ENCODE measurements at regions of chr10 and their contacts with region 1.

Region 1: DNA sequence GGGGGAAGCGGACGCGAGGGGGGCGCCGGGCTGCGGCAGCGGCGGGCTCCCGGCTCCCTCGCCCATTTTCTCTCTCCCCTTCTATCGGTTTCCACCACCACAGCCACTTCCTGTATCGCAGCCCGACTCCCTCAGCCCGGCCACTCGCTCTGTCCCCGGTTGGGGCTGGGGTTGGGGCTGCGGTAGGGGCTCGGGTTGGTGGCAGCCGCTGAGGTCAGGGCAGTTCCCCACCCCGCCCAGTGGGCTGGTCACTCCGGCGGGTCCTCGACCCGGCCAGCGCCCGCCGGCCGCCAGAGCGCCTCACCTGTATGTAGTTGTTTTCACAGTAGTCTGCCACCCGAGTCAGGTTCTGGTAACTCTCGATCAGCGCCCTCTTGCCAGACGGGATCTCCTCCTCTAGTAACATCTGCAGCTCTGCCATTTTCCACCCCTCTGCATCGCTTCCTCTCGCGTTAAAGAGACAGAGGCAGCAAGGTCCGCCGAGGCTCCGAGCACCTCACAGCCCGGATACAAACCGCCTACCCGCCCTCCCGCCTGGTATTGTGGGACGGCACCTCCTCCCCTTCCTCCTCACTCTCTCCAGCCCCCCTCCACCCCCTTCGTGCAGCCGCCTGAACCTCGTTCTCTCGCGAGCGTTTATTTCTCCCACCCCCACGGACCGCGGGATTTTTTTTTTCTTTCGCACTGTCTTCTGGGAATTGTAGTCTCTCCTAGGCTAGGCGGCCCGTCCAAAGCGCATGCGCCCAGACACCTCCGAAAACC is at the start of gene ABI1:
- DNase-seq: peak; percentile 94 to 100 (median 99)
- ATAC-seq: peak; percentile 94
- H3K4me3 ChIP-seq: peak within 1 kb of the TSS; percentile 80
- H3K4me3 Mint-ChIP-seq: peak within 1 kb of the TSS; percentile 88 to 100 (median 97)
- H3K27ac ChIP-seq: peak within 1 kb of the TSS; percentile 96
- H3K27ac Mint-ChIP-seq: peak within 1 kb of the TSS; percentile 95 to 100 (median 97)
- H3K4me1 ChIP-seq: peaks cover 18 to 22% of the 10 kb centered on the region in 2 donors
- H3K4me1 Mint-ChIP-seq: peaks cover 16 to 45% (median 32%) of the 10 kb centered on the region in 7 donors
- H3K27me3 ChIP-seq: no peaks in the 10 kb centered on the region
- H3K27me3 Mint-ChIP-seq: peaks cover 0 to 26% (median 0%) of the 10 kb centered on the region in 5 donors
- total RNA-seq, gene ABI1: 61.9 to 73.7 (median 65.4) TPM

Region 2: GRCh38 chr10:25016376-25017154 is 1844.1 kb before region 1 on chr10 and contains the start of gene THNSL1:
- CTCF ChIA-PET with region 1: no interaction called
- POLR2A ChIA-PET with region 1: no interaction called
- intact Hi-C with region 1: loop called in 1 of 2 experiments (anchors 5 kb)
- DNase-seq: peak; percentile 90 to 99 (median 96)
- ATAC-seq: peak; percentile 97
- H3K4me3 ChIP-seq: peak within 1 kb of the TSS; percentile 76
- H3K4me3 Mint-ChIP-seq: peak within 1 kb of the TSS; percentile 87 to 98 (median 90)
- H3K27ac ChIP-seq: peak within 1 kb of the TSS; percentile 82
- H3K27ac Mint-ChIP-seq: peak within 1 kb of the TSS; percentile 91 to 99 (median 94)
- H3K4me1 ChIP-seq: peaks cover 0 to 8% of the 10 kb centered on the region in 2 donors
- H3K4me1 Mint-ChIP-seq: peaks cover 11 to 43% (median 32%) of the 10 kb centered on the region in 7 donors
- H3K27me3 ChIP-seq: no peaks in the 10 kb centered on the region
- H3K27me3 Mint-ChIP-seq: peaks cover 0 to 10% (median 0%) of the 10 kb centered on the region in 5 donors
- total RNA-seq, gene THNSL1: 1.4 to 10.6 (median 2.5) TPM

Region 3: DNA sequence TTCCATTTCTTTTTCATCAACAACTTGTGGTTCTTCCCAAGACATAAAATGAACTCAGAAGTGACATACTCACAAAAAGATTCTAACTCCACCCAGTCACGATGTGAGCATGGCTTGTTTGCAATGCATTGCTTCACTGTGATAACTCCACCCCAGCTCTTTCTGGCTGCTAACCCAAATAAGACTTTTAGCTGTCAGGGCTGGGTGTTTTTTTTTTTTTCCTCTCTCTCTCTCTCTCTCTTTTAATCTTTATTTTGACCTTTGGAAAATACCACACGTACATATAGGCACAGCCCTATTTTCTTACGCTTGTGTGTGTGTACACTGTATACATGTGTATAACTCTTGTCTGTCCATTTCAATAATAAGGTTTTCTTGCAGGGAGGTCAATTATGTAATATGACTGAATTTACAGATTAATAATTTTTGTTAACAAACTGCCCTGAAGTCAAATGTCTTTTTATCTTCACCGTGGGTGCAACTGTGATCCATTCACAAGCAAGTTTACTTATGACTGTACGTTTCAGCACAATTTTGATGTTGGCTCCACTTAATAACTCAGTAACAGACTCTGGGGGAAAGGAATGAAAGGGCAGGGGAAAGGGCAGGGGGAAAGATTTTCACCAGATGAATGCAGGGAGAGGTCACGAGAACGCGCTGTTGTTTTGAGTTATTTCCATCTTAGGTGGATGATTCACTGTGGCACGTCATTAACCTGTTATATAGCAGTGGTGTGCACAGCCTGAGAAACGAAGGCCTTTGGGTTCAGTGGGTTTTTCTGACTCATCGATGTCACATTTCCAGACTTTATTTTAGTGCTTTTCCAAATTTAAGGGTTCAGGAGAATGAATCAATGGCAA is 373.4 kb before region 1 on chr10:
- CTCF ChIA-PET with region 1: no interaction called
- POLR2A ChIA-PET with region 1: no interaction called
- intact Hi-C with region 1: loop called (anchors 2 kb)
- DNase-seq: peak in 8 of 9 donors; percentile 50 to 86 (median 66)
- ATAC-seq: peak; percentile 85
- H3K4me3 ChIP-seq: peak overlapping the region; percentile 43
- H3K4me3 Mint-ChIP-seq: peak overlapping the region; percentile 8 to 83 (median 74)
- H3K27ac ChIP-seq: peak overlapping the region; percentile 84
- H3K27ac Mint-ChIP-seq: peak overlapping the region; percentile 90 to 97 (median 94)
- H3K4me1 ChIP-seq: peaks cover 56 to 64% of the 10 kb centered on the region in 2 donors
- H3K4me1 Mint-ChIP-seq: peaks cover 57 to 82% (median 74%) of the 10 kb centered on the region in 7 donors
- H3K27me3 ChIP-seq: no peaks in the 10 kb centered on the region
- H3K27me3 Mint-ChIP-seq: no peaks in the 10 kb centered on the region

Region 4: DNA sequence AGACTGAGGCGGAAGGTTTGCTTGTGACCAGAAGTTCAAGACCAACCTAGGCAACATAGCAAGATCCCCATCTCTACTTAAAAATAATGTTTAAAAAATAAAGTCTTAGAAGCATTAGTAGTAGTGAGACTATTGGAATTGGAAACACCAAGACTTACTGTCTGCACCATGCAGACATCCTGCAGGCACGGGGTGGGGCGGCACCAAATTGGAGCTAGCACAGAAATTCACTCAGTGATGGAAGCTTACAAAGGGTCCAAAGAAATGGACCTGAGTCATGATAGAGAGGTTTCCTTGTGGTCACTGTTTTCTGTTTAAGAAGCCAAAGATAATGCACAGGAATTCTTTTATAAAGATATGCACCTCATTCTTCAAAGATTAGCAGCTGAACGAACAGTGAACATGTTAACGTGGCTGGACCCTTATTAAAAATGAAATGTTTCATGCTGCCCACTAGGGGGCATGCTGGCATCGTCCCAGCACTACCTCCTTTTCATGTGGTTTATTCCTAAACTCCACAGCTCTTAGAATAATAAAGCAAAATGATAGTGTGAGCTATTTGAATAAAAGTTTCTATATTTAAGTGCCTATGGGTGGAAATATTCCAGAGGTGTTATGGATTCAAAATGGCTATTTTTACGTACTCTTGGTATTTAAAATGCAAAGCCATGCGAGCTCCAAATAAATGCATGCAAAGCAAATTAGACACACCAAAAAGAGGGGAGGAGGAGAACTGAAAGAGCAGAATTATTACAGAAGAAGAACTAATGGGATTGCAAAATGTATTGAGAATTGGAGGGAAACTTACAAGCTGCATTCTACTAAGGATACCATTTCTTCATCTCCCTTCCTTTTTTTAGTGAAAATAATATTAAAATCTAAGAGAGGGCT is 134.5 kb before region 1 on chr10:
- CTCF ChIA-PET with region 1: interaction called, 10 read pairs
- POLR2A ChIA-PET with region 1: no interaction called
- intact Hi-C with region 1: loop called (anchors 1 kb)
- DNase-seq: peak; percentile 16 to 57 (median 45)
- ATAC-seq: peak; percentile 74
- H3K4me3 ChIP-seq: no peak overlapping the region
- H3K4me3 Mint-ChIP-seq: no peak overlapping the region
- H3K27ac ChIP-seq: no peak overlapping the region
- H3K27ac Mint-ChIP-seq: peak overlapping the region in 1 of 9 donors; percentile 29
- H3K4me1 ChIP-seq: peaks cover 0 to 13% of the 10 kb centered on the region in 2 donors
- H3K4me1 Mint-ChIP-seq: peaks cover 0 to 15% (median 6%) of the 10 kb centered on the region in 7 donors
- H3K27me3 ChIP-seq: no peaks in the 10 kb centered on the region
- H3K27me3 Mint-ChIP-seq: no peaks in the 10 kb centered on the region

Region 5: GRCh38 chr10:26844396-26844975 is 16.1 kb before region 1 on chr10:
- CTCF ChIA-PET with region 1: no interaction called
- POLR2A ChIA-PET with region 1: interaction called, 5 read pairs
- intact Hi-C with region 1: loop called in 1 of 2 experiments (anchors 2 kb)
- DNase-seq: no peak
- ATAC-seq: no peak
- H3K4me3 ChIP-seq: no peak overlapping the region
- H3K4me3 Mint-ChIP-seq: peak overlapping the region in 9 of 10 donors; percentile 6 to 69 (median 41)
- H3K27ac ChIP-seq: no peak overlapping the region
- H3K27ac Mint-ChIP-seq: peak overlapping the region in 7 of 9 donors; percentile 2 to 68 (median 29)
- H3K4me1 ChIP-seq: peaks cover 32% of the 10 kb centered on the region in 2 donors
- H3K4me1 Mint-ChIP-seq: peaks cover 44 to 88% (median 78%) of the 10 kb centered on the region in 7 donors
- H3K27me3 ChIP-seq: no peaks in the 10 kb centered on the region
- H3K27me3 Mint-ChIP-seq: no peaks in the 10 kb centered on the region

Region 6: GRCh38 chr10:27155066-27155754 is 294.6 kb after region 1 on chr10 and contains the start of gene MASTL:
- CTCF ChIA-PET with region 1: no interaction called
- POLR2A ChIA-PET with region 1: interaction called, 4 read pairs
- intact Hi-C with region 1: loop called (anchors 1 kb)
- DNase-seq: peak; percentile 93 to 97 (median 96)
- ATAC-seq: peak; percentile 89
- H3K4me3 ChIP-seq: peak within 1 kb of the TSS; percentile 90
- H3K4me3 Mint-ChIP-seq: peak within 1 kb of the TSS; percentile 91 to 100 (median 99)
- H3K27ac ChIP-seq: peak within 1 kb of the TSS; percentile 99
- H3K27ac Mint-ChIP-seq: peak within 1 kb of the TSS; percentile 100
- H3K4me1 ChIP-seq: peaks cover 13 to 17% of the 10 kb centered on the region in 2 donors
- H3K4me1 Mint-ChIP-seq: peaks cover 34 to 60% (median 50%) of the 10 kb centered on the region in 7 donors
- H3K27me3 ChIP-seq: no peaks in the 10 kb centered on the region
- H3K27me3 Mint-ChIP-seq: peaks cover 0 to 2% (median 0%) of the 10 kb centered on the region in 5 donors
- total RNA-seq, gene MASTL: 8.4 to 29.0 (median 20.2) TPM

Region 7: GRCh38 chr10:28302638-28303488 is 1442.2 kb after region 1 on chr10 and contains the start of gene MPP7:
- CTCF ChIA-PET with region 1: no interaction called
- POLR2A ChIA-PET with region 1: no interaction called
- intact Hi-C with region 1: loop called in 1 of 2 experiments (anchors 2 kb)
- DNase-seq: peak; percentile 96 to 98 (median 97)
- ATAC-seq: peak; percentile 97
- H3K4me3 ChIP-seq: peak within 1 kb of the TSS; percentile 92
- H3K4me3 Mint-ChIP-seq: peak within 1 kb of the TSS; percentile 85 to 99 (median 93)
- H3K27ac ChIP-seq: peak within 1 kb of the TSS; percentile 86
- H3K27ac Mint-ChIP-seq: peak within 1 kb of the TSS; percentile 67 to 98 (median 94)
- H3K4me1 ChIP-seq: peaks cover 8 to 42% of the 10 kb centered on the region in 2 donors
- H3K4me1 Mint-ChIP-seq: peaks cover 27 to 80% (median 67%) of the 10 kb centered on the region in 7 donors
- H3K27me3 ChIP-seq: no peaks in the 10 kb centered on the region
- H3K27me3 Mint-ChIP-seq: peaks cover 0 to 51% (median 0%) of the 10 kb centered on the region in 5 donors
- total RNA-seq, gene MPP7: 9.7 to 44.7 (median 36.1) TPM